Activated T-helper 2 cell treated with anti-CD3 and anti-CD28 coated beads, Interferon-gamma antibody, Interleukin-2, Interleukin-4, amounts not matched to agents 10 μg/mL and 5 μg/mL and 100 μg/mL, durations not matched to agents 14 hours and 24 hours and 36 hours (primary cell): ENCODE measurements at regions of chr11 and their contacts with region 1.

Region 1: GRCh38 chr11:34890812-34891211 is 25.4 kb downstream of the APIP start:
- DNase-seq: no peak
- H3K4me3 Mint-ChIP-seq: no peak overlapping the region
- H3K27ac Mint-ChIP-seq: no peak overlapping the region
- H3K4me1 Mint-ChIP-seq: no peaks in the 10 kb centered on the region
- H3K27me3 Mint-ChIP-seq: no peaks in the 10 kb centered on the region

Region 2: GRCh38 chr11:34512840-34513681 is 377.8 kb before region 1 on chr11:
- intact Hi-C with region 1: loop called (anchors 5 kb)
- DNase-seq: peak; percentile 24
- H3K4me3 Mint-ChIP-seq: no peak overlapping the region
- H3K27ac Mint-ChIP-seq: no peak overlapping the region
- H3K4me1 Mint-ChIP-seq: no peaks in the 10 kb centered on the region
- H3K27me3 Mint-ChIP-seq: peaks cover 7% of the 10 kb centered on the region

Region 3: GRCh38 chr11:34565417-34566207 is 325.2 kb before region 1 on chr11:
- intact Hi-C with region 1: loop called (anchors 5 kb)
- DNase-seq: no peak
- H3K4me3 Mint-ChIP-seq: no peak overlapping the region
- H3K27ac Mint-ChIP-seq: no peak overlapping the region
- H3K4me1 Mint-ChIP-seq: peaks cover 3% of the 10 kb centered on the region
- H3K27me3 Mint-ChIP-seq: peaks cover 28% of the 10 kb centered on the region

Region 4: GRCh38 chr11:34585735-34586487 is 304.9 kb before region 1 on chr11:
- intact Hi-C with region 1: loop called (anchors 1 kb)
- DNase-seq: no peak
- H3K4me3 Mint-ChIP-seq: no peak overlapping the region
- H3K27ac Mint-ChIP-seq: no peak overlapping the region
- H3K4me1 Mint-ChIP-seq: peaks cover 2% of the 10 kb centered on the region
- H3K27me3 Mint-ChIP-seq: peaks cover 50% of the 10 kb centered on the region

Region 5: GRCh38 chr11:34869426-34869825 is 21.4 kb before region 1 on chr11:
- intact Hi-C with region 1: no loop called
- DNase-seq: no peak
- H3K4me3 Mint-ChIP-seq: no peak overlapping the region
- H3K27ac Mint-ChIP-seq: no peak overlapping the region
- H3K4me1 Mint-ChIP-seq: no peaks in the 10 kb centered on the region
- H3K27me3 Mint-ChIP-seq: peaks cover 5% of the 10 kb centered on the region